ENCODE measurements at regions of chr17 and their contacts with region 1.

Region 1: DNA sequence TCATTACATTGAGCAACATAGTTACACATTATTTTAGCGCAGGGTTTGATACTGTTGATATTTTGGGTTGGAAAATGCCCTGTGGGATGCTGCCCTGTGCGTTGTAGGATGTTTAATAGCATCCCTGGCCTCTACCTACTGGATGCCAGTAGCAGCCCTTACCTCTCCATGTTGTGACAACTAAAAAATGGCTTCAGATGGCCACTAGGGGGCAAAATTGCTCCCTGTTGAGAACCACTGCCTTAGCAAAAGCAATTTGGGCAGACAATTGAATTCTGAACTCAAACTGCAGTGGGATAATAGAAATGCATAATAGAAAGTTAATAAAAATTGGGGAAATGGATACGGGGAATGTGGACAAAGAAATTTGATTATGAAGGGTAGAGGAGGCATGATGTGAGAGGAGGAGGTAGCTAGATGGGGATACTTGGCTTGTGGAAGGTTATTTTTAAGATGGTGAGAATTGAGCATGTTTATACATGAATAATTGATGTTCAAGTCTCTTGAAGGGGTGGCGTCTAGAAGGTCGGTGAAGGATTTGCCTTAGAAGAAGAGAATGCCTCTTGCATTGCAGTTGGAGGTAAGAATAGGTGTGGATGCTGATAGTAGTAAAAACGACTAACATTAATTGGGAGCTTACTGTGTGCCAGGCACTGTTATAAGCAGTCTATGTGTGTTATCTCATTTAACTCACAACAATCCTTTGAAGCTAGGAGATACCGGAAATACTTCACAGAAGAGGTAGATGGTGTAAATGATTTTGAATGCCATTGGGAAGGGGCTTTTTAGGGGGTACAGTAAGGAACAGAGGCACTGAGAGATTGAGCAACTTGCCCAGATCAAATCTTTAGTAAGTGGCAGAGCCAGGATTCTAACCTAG is 19.0 kb downstream of the HEATR9 start:
- DNase-seq: peak; percentile 43
- H3K4me3 ChIP-seq: no peak overlapping the region
- H3K27ac ChIP-seq: no peak overlapping the region
- H3K4me1 ChIP-seq: no peaks in the 10 kb centered on the region
- H3K27me3 ChIP-seq: no peaks in the 10 kb centered on the region
- CTCF ChIP-seq: peak; percentile 77 to 80

Region 2: DNA sequence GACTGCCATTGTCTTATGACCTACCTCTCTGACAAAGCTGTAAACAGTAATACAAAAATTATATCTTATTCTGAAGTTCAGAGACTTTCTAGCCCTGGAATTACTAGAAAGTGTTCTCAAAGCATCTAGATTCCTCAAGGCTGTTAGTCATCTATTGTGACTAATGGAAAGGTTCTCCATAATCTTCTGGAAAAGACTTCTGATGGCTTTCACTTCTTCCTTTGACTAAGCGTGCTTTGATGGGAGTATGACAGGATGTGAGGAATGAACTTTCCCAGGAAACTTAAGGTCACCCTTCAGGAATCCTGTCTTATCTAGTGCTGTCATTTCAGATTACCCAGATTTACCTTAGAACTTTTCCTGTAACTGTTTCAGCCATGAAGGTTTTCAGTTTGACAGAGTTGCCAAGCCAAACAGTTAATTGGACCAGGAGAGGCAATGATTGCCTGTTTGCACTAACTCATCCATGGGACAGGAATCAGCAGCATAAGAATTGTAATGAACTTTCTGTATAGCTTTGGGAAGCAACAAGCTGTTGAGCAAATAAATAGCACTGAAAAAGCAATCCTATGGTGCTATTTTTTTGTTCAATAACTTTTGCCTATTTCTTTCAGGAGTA is 219.1 kb before region 1 on chr17:
- CTCF ChIA-PET with region 1: no interaction called
- dilution Hi-C with region 1: no loop called
- in situ Hi-C with region 1: loop called in 1 of 2 experiments (anchors 25 kb)
- intact Hi-C with region 1: no loop called
- DNase-seq: peak; percentile 70
- H3K4me3 ChIP-seq: no peak overlapping the region
- H3K27ac ChIP-seq: no peak overlapping the region
- H3K4me1 ChIP-seq: peaks cover 8% of the 10 kb centered on the region
- H3K27me3 ChIP-seq: no peaks in the 10 kb centered on the region
- CTCF ChIP-seq: no peak

Region 3: GRCh38 chr17:36148559-36149295 is 299.0 kb after region 1 on chr17:
- CTCF ChIA-PET with region 1: no interaction called
- dilution Hi-C with region 1: no loop called
- in situ Hi-C with region 1: loop called in 1 of 2 experiments (anchors 10 kb)
- intact Hi-C with region 1: no loop called
- DNase-seq: peak; percentile 24
- H3K4me3 ChIP-seq: no peak overlapping the region
- H3K27ac ChIP-seq: no peak overlapping the region
- H3K4me1 ChIP-seq: no peaks in the 10 kb centered on the region
- H3K27me3 ChIP-seq: peaks cover 2% of the 10 kb centered on the region
- CTCF ChIP-seq: peak; percentile 99